ENCODE measurements at regions of chr15 and their contacts with region 1.

Region 1: DNA sequence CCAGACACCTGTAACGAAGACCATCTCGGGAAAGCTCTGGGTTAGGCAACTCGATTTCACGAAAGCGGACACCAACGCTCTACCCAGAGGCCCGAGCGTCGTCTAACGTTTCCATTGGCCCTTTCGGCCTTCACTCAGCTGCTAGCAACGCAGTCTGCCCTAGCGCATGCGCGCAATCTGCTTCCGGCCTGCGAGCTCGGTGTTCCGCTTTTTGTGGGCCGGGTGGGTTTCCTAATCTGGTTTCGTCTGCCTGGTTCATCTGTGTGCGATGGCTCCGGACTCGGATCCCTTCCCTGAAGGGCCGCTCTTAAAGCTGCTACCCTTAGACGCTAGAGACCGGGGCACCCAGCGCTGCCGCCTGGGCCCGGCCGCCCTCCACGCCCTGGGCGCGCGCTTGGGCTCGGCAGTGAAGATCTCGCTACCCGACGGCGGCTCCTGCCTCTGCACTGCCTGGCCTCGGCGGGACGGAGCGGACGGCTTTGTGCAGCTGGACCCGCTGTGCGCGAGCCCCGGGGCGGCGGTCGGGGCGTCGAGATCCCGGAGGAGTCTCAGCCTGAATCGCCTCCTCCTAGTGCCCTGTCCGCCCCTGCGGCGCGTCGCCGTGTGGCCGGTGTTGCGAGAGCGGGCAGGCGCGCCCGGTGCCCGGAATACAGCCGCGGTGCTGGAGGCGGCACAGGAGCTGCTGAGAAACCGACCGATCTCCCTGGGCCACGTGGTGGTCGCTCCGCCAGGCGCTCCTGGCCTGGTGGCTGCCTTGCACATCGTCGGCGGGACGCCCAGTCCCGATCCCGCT is 24.0 kb upstream of the GATM start:
- DNase-seq: peak; percentile 100
- H3K4me3 ChIP-seq: peak overlapping the region; percentile 87
- H3K27ac ChIP-seq: peak overlapping the region; percentile 82
- H3K4me1 ChIP-seq: peaks cover 37% of the 10 kb centered on the region
- CTCF ChIP-seq: no peak

Region 2: DNA sequence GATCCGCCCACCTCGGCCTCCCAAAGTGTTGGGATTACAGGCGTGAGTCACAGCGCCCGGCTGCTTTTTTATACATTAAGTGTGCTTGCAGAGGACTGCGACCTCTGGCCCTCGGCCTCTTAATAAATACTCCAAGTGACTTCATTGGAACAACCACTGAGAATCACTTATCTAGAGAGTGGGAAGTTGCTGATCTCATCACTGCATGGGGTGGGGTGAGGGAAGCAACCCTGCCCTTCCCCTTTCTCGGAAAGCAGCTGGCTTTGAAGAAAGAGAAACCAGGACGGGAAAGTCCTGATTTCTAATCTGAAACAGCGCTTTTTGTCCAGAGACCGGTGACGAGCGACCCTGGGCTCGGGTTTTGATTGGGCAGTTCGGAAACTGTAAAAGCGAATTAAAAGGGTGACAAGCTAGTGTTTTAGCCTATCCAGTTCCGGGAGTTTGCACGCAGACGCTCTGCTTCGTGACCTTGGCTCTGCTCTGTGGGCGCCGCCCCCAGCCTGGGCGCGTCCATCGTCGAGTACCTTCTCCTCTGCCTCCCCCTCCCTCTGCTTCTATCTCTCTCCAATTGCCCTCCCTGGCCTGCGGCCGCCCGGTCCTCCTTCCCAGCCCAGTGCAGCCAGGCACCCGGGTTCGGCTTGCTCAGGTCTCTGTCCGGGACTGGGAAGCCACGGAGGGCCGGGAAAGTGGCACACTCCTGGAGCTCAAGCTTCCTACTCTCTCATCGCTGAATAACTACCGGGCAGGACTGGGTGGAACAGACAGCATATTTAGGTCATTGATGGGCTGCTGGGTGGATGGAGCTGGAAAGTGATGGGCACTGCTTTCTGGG is 673.6 kb before region 1 on chr15:
- CTCF ChIA-PET with region 1: no interaction called
- POLR2A ChIA-PET with region 1: no interaction called
- intact Hi-C with region 1: loop called (anchors 5 kb)
- DNase-seq: peak; percentile 98
- H3K4me3 ChIP-seq: peak overlapping the region; percentile 81
- H3K27ac ChIP-seq: peak overlapping the region; percentile 90
- H3K4me1 ChIP-seq: peaks cover 56% of the 10 kb centered on the region
- CTCF ChIP-seq: no peak

Region 3: GRCh38 chr15:45198337-45199135 is 203.8 kb before region 1 on chr15:
- CTCF ChIA-PET with region 1: interaction called, 3 read pairs
- POLR2A ChIA-PET with region 1: interaction called, 10 read pairs
- intact Hi-C with region 1: loop called (anchors 1 kb)
- DNase-seq: peak; percentile 95
- H3K4me3 ChIP-seq: peak overlapping the region; percentile 85
- H3K27ac ChIP-seq: peak overlapping the region; percentile 76
- H3K4me1 ChIP-seq: peaks cover 31% of the 10 kb centered on the region
- CTCF ChIP-seq: peak; percentile 85

Region 4: DNA sequence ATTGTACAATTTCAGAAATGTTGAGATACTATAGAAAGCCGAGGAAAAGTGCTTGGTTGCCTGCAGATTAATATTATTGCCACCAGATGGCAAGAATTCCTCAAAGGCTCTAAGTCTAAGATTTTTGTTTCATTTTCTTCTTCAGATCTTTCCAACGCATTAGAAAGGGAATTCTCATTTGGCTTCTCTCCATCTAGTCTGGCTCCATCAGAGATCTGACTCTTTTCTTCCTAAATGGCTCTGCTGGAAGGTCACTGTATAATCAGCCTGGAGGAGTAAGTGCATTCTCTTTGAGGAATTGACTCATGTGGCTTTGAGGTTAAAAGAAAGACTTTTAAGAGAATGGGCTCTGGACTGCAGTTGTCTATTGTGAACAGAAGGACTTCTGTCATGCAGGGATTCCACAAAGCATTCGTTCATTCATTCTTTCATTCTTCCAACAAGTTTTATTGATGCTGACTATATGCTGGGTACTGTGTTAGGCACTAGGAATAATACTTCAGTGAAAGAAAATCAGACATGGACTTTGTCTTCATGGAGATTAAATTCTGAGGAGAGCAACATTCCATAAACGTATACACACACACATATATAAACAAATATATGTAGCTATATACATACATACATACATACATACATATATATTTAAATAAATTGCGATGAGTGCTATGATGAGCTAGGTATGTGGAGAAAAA is 95.0 kb before region 1 on chr15:
- CTCF ChIA-PET with region 1: interaction called, 3 read pairs
- POLR2A ChIA-PET with region 1: interaction called, 4 read pairs
- intact Hi-C with region 1: loop called (anchors 1 kb)
- DNase-seq: peak; percentile 33
- H3K4me3 ChIP-seq: no peak overlapping the region
- H3K27ac ChIP-seq: no peak overlapping the region
- H3K4me1 ChIP-seq: no peaks in the 10 kb centered on the region
- CTCF ChIP-seq: peak; percentile 76

Region 5: DNA sequence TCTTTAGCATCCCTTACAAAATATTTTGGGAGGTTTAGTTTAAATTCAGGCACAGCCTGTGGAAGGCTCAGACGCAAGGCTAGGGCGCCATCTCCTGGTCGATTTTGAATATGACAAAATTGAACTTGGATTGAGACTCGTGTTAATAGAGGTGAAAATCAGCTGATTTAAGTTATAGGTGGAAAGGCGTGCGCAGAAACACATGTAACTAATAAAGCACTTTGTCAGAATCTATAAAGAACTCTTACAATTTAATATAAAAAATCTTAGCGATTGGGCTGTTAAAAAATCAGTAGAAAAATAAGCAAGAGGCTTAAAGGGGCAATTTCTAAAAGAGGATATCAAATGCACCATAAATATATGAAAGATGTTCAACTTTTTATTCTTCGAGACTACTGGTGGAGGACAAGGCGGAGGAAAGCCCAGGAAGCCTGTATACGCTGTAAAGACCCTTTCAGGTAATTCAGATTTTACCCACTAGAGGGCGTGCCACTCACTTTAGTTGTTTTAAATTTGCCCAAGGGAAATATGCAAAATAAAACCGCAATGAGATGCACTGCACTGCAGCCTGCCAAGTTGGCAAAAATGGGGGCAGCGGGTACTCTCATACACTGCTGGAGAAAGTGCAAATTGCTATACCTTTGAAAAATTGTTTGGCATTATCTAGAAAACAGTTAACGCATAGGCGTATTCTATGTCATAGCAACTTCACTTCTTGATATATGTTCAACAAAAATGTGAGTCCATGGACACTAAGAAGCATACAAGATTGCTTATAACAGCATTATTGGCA is 55.5 kb after region 1 on chr15:
- CTCF ChIA-PET with region 1: no interaction called
- POLR2A ChIA-PET with region 1: interaction called, 3 read pairs
- intact Hi-C with region 1: loop called (anchors 1 kb)
- DNase-seq: peak; percentile 94
- H3K4me3 ChIP-seq: peak overlapping the region; percentile 67
- H3K27ac ChIP-seq: peak overlapping the region; percentile 63
- H3K4me1 ChIP-seq: peaks cover 29% of the 10 kb centered on the region
- CTCF ChIP-seq: peak; percentile 95

Measured in OCI-LY7 (cell line).